Adrenal gland (tissue), 19 donors: ENCODE measurements at regions of chr2 and their contacts with region 1.

Region 1: GRCh38 chr2:170815746-170816503 is 762 bp upstream of the GAD1 start:
- DNase-seq: peak; percentile 53 to 76 (median 68)
- H3K4me3 ChIP-seq: peak overlapping the region in 1 of 4 donors; percentile 63
- H3K27ac ChIP-seq: peak overlapping the region in 1 of 5 donors; percentile 76
- H3K4me1 ChIP-seq: peaks cover 20 to 27% of the 10 kb centered on the region in 2 donors
- H3K27me3 ChIP-seq: peaks cover 36% of the 10 kb centered on the region
- CTCF ChIP-seq: peak; percentile 60 to 87 (median 82)
- POLR2A ChIP-seq: no peak

Region 2: DNA sequence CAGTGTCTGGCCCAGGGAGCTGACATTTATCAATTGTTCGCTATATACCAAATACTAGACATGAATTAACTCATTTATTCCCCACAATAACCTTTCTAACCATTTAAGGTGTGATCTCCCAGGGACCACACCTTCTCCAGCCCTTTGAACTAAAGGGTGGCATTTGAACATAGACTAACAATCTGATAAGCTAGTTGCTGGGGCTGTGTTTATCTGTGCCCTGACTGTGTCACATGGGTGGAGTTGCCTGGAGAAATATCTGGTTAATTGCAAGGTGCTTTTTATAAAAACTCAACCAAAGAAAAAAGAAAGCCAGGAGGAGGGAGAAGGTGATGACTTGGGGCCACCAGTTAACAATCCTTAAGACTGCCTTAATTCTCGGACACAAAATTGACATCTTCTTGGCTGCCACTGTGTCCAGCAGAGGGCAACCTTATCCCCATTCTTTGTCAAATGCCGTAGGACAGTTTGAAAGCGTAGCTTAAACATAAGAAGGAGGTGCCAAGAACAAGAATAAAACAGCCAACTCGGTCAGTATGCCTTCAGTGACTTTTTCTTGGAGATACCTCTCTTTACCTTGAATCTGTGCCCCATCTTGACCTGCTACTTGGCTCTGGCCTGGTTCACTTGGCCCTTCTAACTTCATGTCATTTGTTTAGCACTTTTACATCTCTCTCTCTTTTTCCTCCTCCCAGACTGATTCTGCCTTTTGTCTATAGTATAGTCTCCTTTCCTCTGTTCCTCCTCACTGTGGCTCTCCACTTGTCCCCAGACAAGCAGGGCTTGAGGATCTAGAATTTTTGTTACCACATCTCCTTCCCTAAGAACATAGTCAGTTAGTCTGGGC is 454.6 kb before region 1 on chr2:
- intact Hi-C with region 1: loop called in 1 of 2 experiments (anchors 10 kb)
- DNase-seq: peak; percentile 22 to 80 (median 55)
- H3K4me3 ChIP-seq: no peak overlapping the region
- H3K27ac ChIP-seq: no peak overlapping the region
- H3K4me1 ChIP-seq: no peaks in the 10 kb centered on the region
- H3K27me3 ChIP-seq: peaks cover 8% of the 10 kb centered on the region
- CTCF ChIP-seq: peak; percentile 48 to 64 (median 61)
- POLR2A ChIP-seq: no peak

Region 3: GRCh38 chr2:170369894-170370293 is 446.0 kb before region 1 on chr2:
- intact Hi-C with region 1: loop called (anchors 10 kb)
- DNase-seq: no peak
- H3K4me3 ChIP-seq: no peak overlapping the region
- H3K27ac ChIP-seq: no peak overlapping the region
- H3K4me1 ChIP-seq: no peaks in the 10 kb centered on the region
- H3K27me3 ChIP-seq: peaks cover 32% of the 10 kb centered on the region
- CTCF ChIP-seq: peak in 5 of 6 experiments; percentile 15 to 48 (median 30)
- POLR2A ChIP-seq: no peak

Region 4: DNA sequence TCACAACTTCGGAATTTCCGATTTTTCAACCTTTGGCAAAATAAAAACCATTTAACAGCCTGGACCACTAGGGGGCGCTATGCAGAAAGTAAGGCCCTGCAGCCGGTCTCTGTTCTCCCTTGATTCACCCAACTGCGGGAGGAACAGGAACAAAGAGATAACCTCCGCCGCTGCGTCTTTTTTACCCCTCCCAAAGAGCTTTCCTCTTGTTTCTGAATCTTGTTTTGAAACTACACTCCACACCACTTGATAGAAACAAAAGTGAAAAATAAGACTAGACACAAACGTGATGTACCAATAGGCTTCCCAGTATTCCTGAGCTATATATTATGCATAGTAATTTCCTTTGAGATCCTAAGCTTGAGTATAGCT is 406.8 kb before region 1 on chr2:
- intact Hi-C with region 1: loop called (anchors 5 to 10 kb)
- DNase-seq: peak; percentile 64 to 89 (median 79)
- H3K4me3 ChIP-seq: peak overlapping the region in 1 of 4 donors; percentile 38
- H3K27ac ChIP-seq: no peak overlapping the region
- H3K4me1 ChIP-seq: peaks cover 0 to 5% of the 10 kb centered on the region in 2 donors
- H3K27me3 ChIP-seq: peaks cover 18% of the 10 kb centered on the region
- CTCF ChIP-seq: peak; percentile 70 to 97 (median 82)
- POLR2A ChIP-seq: no peak

Region 5: GRCh38 chr2:170486730-170487129 is 329.2 kb before region 1 on chr2:
- intact Hi-C with region 1: loop called in 1 of 2 experiments (anchors 10 kb)
- DNase-seq: no peak
- H3K4me3 ChIP-seq: no peak overlapping the region
- H3K27ac ChIP-seq: no peak overlapping the region
- H3K4me1 ChIP-seq: no peaks in the 10 kb centered on the region
- H3K27me3 ChIP-seq: no peaks in the 10 kb centered on the region
- CTCF ChIP-seq: peak in 2 of 6 experiments; percentile 20 to 29
- POLR2A ChIP-seq: no peak

Region 6: GRCh38 chr2:170873035-170873692 is 57.2 kb after region 1 on chr2:
- intact Hi-C with region 1: loop called in 1 of 2 experiments (anchors 10 kb)
- DNase-seq: peak; percentile 77 to 89 (median 80)
- H3K4me3 ChIP-seq: peak overlapping the region in 2 of 4 donors; percentile 31 to 43
- H3K27ac ChIP-seq: peak overlapping the region in 1 of 5 donors; percentile 10
- H3K4me1 ChIP-seq: peaks cover 0 to 8% of the 10 kb centered on the region in 2 donors
- H3K27me3 ChIP-seq: no peaks in the 10 kb centered on the region
- CTCF ChIP-seq: peak; percentile 76 to 91 (median 85)
- POLR2A ChIP-seq: no peak